ENCODE measurements at regions of chr7 and their contacts with region 1.

Region 1: GRCh38 chr7:44638611-44639557 is 32.5 kb downstream of the OGDH start:
- DNase-seq: peak; percentile 84
- H3K4me3 Mint-ChIP-seq: peak overlapping the region; percentile 82
- H3K27ac Mint-ChIP-seq: peak overlapping the region; percentile 100
- H3K4me1 Mint-ChIP-seq: peaks cover 81% of the 10 kb centered on the region
- H3K27me3 Mint-ChIP-seq: no peaks in the 10 kb centered on the region

Region 2: DNA sequence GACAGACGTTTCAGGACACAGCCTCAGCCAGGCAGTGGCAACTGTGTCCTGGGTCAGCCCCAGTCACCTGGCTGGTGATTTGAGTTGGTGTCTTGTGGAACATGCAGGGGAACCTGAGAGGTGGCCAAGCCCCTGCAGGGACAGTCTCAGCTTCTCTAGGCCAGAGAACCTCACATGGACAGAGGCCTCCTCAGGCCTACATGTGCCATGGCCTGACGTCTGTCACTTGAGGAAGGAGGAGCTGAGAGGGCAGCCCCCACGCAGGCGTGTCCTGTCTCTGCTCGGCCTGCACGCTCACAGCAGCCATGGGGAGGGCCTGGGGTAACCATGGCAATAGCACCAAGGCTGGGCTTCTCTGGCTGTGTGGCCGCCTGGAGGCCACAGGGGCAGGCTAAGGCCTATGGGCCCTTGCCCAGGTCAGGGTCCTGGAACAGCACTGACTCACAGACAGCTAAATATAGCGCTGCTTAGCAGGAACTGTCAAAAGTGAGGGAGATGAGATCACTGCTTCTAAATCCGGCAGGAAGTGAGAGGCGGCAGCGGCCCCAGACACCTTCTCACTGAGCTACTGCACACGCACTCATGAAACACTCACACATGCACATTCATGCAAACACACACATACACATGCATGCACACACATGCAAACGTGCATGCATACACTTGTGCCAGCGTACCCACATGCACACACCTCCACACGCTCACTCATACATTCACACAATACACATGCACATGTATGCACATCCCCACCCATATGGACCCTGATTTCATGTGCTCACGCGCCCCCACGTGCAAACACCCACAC is 381.1 kb before region 1 on chr7:
- intact Hi-C with region 1: loop called (anchors 1 kb)
- DNase-seq: peak; percentile 69
- H3K4me3 Mint-ChIP-seq: peak overlapping the region; percentile 56
- H3K27ac Mint-ChIP-seq: peak overlapping the region; percentile 78
- H3K4me1 Mint-ChIP-seq: peaks cover 34% of the 10 kb centered on the region
- H3K27me3 Mint-ChIP-seq: no peaks in the 10 kb centered on the region

Region 3: GRCh38 chr7:44541028-44541869 is 97.6 kb before region 1 on chr7 and contains the start of gene NPC1L1:
- intact Hi-C with region 1: no loop called
- DNase-seq: no peak
- H3K4me3 Mint-ChIP-seq: no peak within 1 kb of the TSS
- H3K27ac Mint-ChIP-seq: no peak within 1 kb of the TSS
- H3K4me1 Mint-ChIP-seq: no peaks in the 10 kb centered on the region
- H3K27me3 Mint-ChIP-seq: no peaks in the 10 kb centered on the region
- total RNA-seq, gene NPC1L1: not detected in 2 replicates

Region 4: DNA sequence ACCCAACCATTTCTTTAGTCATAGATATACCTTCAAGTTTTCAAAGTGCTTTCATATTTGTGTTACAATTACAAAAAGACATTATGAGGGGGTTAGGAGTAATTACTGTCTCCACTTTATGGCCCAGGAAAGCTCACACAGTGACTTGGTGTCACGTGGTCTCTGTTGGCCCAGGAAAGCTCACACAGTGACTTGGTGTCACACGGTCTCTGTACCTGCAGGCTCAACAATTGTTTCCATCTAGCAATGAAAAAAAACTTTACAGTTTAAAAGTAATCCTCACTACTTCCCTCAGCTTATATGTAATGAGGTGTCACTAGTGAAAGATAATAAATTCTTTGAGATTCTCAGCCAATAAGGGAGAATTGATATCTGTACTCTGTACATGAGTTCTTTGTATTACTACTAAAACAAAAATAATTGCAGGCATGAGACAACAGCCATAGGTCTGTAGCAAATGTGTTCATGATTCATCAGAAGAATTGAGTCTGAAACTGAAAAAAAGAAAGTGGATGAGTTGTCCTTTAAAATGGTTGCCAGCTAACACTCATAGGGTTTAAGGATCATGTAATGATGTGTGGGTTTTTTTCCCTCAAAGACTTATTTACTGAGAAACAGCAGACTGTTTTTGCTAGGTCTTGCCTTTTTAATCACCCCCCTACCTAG is 21.5 kb before region 1 on chr7:
- intact Hi-C with region 1: loop called (anchors 1 kb)
- DNase-seq: no peak
- H3K4me3 Mint-ChIP-seq: peak overlapping the region; percentile 72
- H3K27ac Mint-ChIP-seq: peak overlapping the region; percentile 95
- H3K4me1 Mint-ChIP-seq: peaks cover 73% of the 10 kb centered on the region
- H3K27me3 Mint-ChIP-seq: no peaks in the 10 kb centered on the region

Region 5: DNA sequence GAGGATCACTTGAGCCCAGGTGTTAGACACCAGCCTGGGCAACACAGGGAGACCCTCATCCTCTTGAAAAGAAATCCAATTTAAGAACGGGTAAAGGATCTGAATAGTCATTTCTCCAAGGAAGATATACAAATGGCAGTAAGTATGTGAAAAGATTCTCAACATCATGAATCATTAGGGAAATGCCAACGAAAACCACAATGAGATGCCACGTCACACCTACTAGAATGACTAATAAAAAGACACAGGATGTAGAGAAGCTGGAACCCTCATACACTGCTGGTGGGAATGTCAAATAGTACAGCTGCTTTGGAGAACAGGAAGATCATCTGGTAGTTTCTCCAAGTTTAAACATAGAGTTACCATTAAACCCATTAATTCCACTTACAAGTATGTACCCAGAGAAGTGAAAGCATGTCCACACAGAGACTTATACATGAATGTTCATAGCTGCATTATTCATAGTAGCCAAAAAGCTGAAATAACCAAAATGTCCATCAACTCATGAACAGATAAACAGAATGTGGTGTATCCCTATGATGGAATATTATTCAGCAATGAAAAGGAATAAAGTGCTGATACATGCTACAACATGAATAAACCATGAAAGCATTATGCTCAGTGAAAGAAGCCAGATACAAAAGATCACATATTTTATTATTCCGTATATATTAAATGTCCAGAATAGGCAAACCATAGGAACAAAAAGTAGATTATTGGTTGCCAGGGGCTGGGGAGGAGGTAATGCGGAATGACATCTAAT is 96.7 kb after region 1 on chr7:
- intact Hi-C with region 1: loop called (anchors 1 kb)
- DNase-seq: peak; percentile 42
- H3K4me3 Mint-ChIP-seq: peak overlapping the region; percentile 50
- H3K27ac Mint-ChIP-seq: peak overlapping the region; percentile 89
- H3K4me1 Mint-ChIP-seq: peaks cover 29% of the 10 kb centered on the region
- H3K27me3 Mint-ChIP-seq: peaks cover 2% of the 10 kb centered on the region

Region 6: DNA sequence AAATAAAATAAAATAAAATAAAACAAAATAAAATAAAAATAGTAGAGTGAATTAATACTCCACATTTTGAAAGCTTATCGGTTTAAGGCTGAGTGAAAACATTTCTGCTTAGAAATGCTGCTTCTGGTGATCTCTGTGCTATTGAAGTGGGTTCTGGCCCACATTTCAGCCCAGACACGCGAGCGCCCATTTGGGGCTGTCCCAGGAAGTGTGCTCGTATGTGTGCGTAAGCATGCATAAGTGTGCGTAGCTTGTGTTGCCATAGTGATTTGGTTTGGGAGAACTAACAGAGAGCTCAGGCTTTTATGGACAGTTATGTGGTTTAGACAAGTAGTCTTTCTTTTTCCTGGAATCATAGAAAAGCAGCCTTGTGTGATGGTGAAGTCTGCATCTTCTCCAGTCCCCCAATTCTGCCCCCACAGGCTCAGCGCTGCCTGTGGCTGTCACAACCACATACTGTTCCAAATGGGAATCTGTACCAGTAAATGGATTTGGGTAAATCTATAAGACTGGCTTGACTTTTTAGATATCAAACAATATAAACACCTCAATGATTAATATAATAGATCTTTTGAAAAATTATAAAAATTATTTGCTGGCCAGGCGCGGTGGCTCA is 276.2 kb after region 1 on chr7:
- intact Hi-C with region 1: loop called (anchors 1 kb)
- DNase-seq: peak; percentile 78
- H3K4me3 Mint-ChIP-seq: peak overlapping the region; percentile 67
- H3K27ac Mint-ChIP-seq: peak overlapping the region; percentile 85
- H3K4me1 Mint-ChIP-seq: peaks cover 16% of the 10 kb centered on the region
- H3K27me3 Mint-ChIP-seq: peaks cover 2% of the 10 kb centered on the region

Region 7: DNA sequence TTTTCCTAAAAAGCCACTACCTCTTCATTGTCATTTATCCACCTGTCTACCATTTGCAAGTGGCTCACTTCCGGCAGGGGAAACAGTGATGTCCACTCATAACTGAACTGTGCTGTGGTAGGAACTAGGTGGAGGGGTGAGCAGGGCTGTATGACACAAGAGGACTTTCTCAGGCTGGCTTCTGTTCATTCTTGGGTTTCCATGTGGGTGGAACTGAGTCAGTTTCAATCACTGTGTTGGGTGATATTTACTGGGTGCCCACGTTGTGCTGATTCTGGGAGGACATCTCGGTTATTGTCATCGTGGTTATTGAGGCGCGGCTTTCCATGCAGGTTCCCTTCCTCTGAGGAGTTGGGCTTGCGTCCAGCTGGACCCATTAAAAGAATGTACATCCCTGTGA is 557.5 kb after region 1 on chr7:
- intact Hi-C with region 1: loop called (anchors 1 kb)
- DNase-seq: peak; percentile 14
- H3K4me3 Mint-ChIP-seq: no peak overlapping the region
- H3K27ac Mint-ChIP-seq: peak overlapping the region; percentile 83
- H3K4me1 Mint-ChIP-seq: peaks cover 67% of the 10 kb centered on the region
- H3K27me3 Mint-ChIP-seq: peaks cover 4% of the 10 kb centered on the region

Measured in activated T-helper 1 cell treated with anti-CD3 and anti-CD28 coated beads, Interleukin-12 subunit alpha, Interleukin-12 subunit beta, Interleukin-2, Interleukin-4 antibody, amounts not matched to agents 30 ng/mL and 10 ng/mL and 1 ng/mL, durations not matched to agents 14 hours and 24 hours and 36 hours (primary cell).